ENCODE measurements at regions of chr16 and their contacts with region 1.

Region 1: GRCh38 chr16:2429034-2429770 is at the start of gene CCNF:
- DNase-seq: peak; percentile 98
- ATAC-seq: peak; percentile 94
- H3K4me3 Mint-ChIP-seq: peak within 1 kb of the TSS; percentile 99
- H3K27ac Mint-ChIP-seq: peak within 1 kb of the TSS; percentile 93
- H3K4me1 Mint-ChIP-seq: peaks cover 41% of the 10 kb centered on the region
- H3K27me3 Mint-ChIP-seq: no peaks in the 10 kb centered on the region
- total RNA-seq, gene CCNF: 105 to 110 TPM

Region 2: GRCh38 chr16:2121853-2122252 is 307.3 kb before region 1 on chr16:
- CTCF ChIA-PET with region 1: no interaction called
- POLR2A ChIA-PET with region 1: no interaction called
- DNase-seq: no peak
- ATAC-seq: no peak
- H3K4me3 Mint-ChIP-seq: no peak overlapping the region
- H3K27ac Mint-ChIP-seq: no peak overlapping the region
- H3K4me1 Mint-ChIP-seq: no peaks in the 10 kb centered on the region
- H3K27me3 Mint-ChIP-seq: no peaks in the 10 kb centered on the region

Region 3: GRCh38 chr16:2317231-2318020 is 111.8 kb before region 1 on chr16:
- CTCF ChIA-PET with region 1: no interaction called
- POLR2A ChIA-PET with region 1: no interaction called
- DNase-seq: no peak
- ATAC-seq: no peak
- H3K4me3 Mint-ChIP-seq: no peak overlapping the region
- H3K27ac Mint-ChIP-seq: no peak overlapping the region
- H3K4me1 Mint-ChIP-seq: no peaks in the 10 kb centered on the region
- H3K27me3 Mint-ChIP-seq: no peaks in the 10 kb centered on the region

Region 4: DNA sequence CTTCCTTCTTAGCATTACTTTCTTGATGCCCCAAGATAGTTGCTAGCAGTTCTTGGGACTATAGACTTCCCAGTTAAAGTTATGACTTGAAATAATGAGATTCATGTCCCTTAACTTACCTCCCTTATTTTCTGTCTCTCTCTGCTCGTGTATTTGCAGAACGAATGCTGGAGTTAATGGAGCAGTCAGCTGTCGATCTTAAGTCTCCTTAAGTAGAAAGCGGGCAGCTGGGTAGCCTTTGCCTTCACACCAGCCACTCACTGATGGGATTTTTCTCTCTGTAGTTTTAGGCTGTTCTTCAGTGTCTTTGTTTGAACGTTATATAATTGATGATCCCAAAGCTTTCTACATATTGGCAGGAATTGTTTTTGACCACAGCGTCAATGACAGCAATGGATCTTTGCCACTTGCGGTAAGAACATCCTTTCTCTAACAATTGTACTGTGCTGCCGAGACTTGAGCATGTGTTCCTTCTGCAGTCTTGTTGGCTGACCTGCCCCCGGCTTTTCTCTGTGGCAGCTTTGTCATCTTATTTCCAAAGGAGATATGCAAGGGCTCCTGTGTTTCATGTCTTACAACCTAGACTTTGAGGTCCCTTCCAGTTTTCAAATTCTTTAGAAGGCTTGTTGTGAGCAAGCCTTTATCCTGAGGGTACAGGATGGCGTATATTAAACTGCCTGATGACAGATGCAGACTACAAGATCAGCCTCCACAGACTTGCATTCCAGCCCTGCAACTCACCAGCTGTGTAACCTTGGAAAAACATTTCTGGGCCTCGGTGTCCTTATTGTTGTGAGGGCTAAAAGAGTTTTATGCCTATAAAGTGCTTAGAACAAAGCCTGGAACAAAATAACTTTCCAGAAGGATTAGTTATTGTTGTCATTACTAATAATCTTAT is 63.6 kb before region 1 on chr16:
- CTCF ChIA-PET with region 1: no interaction called
- POLR2A ChIA-PET with region 1: no interaction called
- DNase-seq: no peak
- ATAC-seq: no peak
- H3K4me3 Mint-ChIP-seq: no peak overlapping the region
- H3K27ac Mint-ChIP-seq: no peak overlapping the region
- H3K4me1 Mint-ChIP-seq: no peaks in the 10 kb centered on the region
- H3K27me3 Mint-ChIP-seq: peaks cover 37% of the 10 kb centered on the region

Region 5: GRCh38 chr16:2439598-2439997 is 10.4 kb after region 1 on chr16:
- CTCF ChIA-PET with region 1: interaction called, 20 read pairs
- POLR2A ChIA-PET with region 1: interaction called, 5 read pairs
- DNase-seq: no peak
- ATAC-seq: no peak
- H3K4me3 Mint-ChIP-seq: no peak overlapping the region
- H3K27ac Mint-ChIP-seq: peak overlapping the region; percentile 74
- H3K4me1 Mint-ChIP-seq: peaks cover 29% of the 10 kb centered on the region
- H3K27me3 Mint-ChIP-seq: no peaks in the 10 kb centered on the region

Region 6: DNA sequence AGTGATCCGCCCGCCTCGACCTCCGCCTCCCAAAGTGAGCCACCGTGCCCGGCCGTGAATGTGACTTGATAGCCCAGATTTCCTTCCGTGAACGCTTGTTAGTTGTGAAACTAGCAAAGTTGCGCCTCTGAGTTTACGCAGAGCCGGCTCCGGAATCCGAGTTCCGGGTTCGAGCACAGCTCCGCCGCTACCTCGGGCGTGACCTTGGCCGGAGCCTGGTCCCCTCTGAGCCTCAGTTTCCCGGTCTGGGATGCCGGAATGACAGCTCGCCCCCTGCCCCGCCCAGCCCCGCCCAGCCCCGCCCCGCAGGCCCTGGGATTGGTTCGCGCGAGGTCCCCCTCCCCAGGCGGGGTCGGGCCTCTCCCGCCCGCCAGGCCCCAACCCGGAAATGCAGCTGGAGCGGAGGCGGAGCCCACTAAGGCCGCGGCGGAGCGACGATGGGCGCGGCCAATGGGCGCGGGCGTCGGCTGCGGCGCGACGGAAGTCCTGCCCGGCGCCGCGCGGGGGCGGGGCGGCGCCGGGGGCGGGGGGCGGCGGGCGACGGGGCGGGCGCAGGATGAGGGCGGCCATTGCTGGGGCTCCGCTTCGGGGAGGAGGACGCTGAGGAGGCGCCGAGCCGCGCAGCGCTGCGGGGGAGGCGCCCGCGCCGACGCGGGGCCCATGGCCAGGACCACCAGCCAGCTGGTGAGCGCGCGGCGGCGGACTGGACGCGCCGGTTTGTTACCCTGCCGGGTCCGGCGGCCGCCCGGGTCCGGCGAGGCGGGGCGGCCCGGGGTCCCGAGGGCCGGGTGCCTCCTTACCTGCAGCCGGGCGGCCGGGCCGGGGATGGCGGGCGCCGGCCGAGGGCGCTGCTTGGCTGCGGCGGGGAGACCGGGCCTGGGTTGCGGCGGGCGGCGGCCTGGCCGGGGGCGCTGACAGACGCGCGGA is 108.5 kb after region 1 on chr16 and contains the start of gene PDPK1:
- CTCF ChIA-PET with region 1: no interaction called
- POLR2A ChIA-PET with region 1: no interaction called
- DNase-seq: peak; percentile 94
- ATAC-seq: peak; percentile 94
- H3K4me3 Mint-ChIP-seq: peak within 1 kb of the TSS; percentile 88
- H3K27ac Mint-ChIP-seq: peak within 1 kb of the TSS; percentile 95
- H3K4me1 Mint-ChIP-seq: peaks cover 52% of the 10 kb centered on the region
- H3K27me3 Mint-ChIP-seq: no peaks in the 10 kb centered on the region
- total RNA-seq, gene PDPK1: 41.2 to 49.6 TPM